ENCODE measurements at regions of chr9 and their contacts with region 1.

Region 1: DNA sequence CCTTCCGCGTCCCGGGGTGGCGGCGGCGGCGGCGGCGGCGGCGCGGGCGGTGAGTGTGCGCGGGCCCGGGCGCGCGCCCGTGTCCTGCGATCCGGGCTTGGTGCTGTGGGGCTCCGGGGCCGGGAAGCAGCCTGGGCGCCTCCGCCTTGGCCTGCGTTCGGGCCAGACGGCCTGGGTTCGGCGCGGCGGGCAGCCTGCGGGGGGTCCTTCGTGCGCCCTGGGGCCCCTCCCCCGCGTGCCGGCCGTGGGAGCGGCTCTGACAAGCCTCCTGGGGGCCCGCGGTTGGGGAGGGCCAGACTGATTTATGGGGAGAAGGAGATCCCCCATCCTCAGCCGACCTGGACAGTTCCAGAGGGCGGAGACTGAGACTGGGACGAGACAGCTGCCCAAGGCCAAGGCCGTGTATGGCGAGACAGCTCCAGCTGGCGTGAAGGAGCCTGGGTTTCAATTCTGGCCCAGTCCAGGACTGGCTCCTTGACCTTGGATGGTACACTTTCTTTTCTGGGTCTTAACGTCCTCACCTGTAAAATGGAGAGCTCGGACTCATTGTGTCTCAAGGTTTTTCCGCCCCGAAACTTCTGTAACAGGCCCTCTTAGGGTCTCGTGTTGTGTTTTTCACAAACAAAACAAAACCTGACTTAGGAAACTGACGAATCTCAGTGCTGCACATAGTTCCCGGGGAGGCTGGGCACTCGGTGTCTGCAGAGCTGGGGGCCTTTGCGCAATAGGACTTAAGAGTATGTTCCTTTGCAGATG is 603 bp downstream of the TMEM268 start:
- DNase-seq: peak; percentile 58
- ATAC-seq: peak; percentile 84
- H3K4me3 ChIP-seq: peak overlapping the region; percentile 56
- H3K27ac ChIP-seq: peak overlapping the region; percentile 76
- H3K4me1 ChIP-seq: peaks cover 19% of the 10 kb centered on the region
- H3K27me3 ChIP-seq: no peaks in the 10 kb centered on the region
- CTCF ChIP-seq: no peak
- POLR2A ChIP-seq: peak; percentile 20; the same call in 1 of the 2 replicates
- RAD21 ChIP-seq: no peak

Region 2: GRCh38 chr9:114487607-114488300 is 123.9 kb before region 1 on chr9:
- CTCF ChIA-PET with region 1: no interaction called
- POLR2A ChIA-PET with region 1: no interaction called
- dilution Hi-C with region 1: no loop called
- in situ Hi-C with region 1: no loop called
- intact Hi-C with region 1: loop called (anchors 5 kb)
- DNase-seq: peak; percentile 69
- ATAC-seq: peak; percentile 98
- H3K4me3 ChIP-seq: no peak overlapping the region
- H3K27ac ChIP-seq: no peak overlapping the region
- H3K4me1 ChIP-seq: peaks cover 4% of the 10 kb centered on the region
- H3K27me3 ChIP-seq: peaks cover 1% of the 10 kb centered on the region; the same call in 1 of the 2 replicates
- CTCF ChIP-seq: peak; percentile 86
- POLR2A ChIP-seq: 0 out of 2 replicates have a peak, but pooled peaks have one; percentile 35
- RAD21 ChIP-seq: peak; percentile 87

Region 3: DNA sequence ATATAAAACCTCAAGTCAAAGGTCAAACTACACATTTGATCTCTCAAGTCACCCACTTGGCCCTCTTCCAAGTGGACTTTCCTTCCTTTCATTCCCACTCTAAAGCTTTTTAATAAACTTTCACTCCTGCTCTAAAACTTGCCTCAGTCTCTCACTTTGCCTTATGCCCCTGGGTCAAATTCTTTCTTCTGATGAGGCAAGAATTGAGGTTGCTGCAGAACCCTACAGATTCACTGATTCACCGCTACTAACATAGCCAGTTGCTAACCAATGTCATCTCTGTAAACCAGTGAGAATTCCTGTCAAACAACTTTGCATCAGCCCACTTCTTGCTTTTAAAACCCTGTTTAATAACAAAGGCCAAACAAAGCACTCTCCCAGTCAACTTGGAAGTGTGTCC is 31.0 kb before region 1 on chr9:
- CTCF ChIA-PET with region 1: no interaction called
- POLR2A ChIA-PET with region 1: no interaction called
- dilution Hi-C with region 1: no loop called
- in situ Hi-C with region 1: no loop called
- intact Hi-C with region 1: no loop called
- DNase-seq: no peak
- ATAC-seq: no peak
- H3K4me3 ChIP-seq: no peak overlapping the region
- H3K27ac ChIP-seq: no peak overlapping the region
- H3K4me1 ChIP-seq: no peaks in the 10 kb centered on the region
- H3K27me3 ChIP-seq: peaks cover 2% of the 10 kb centered on the region; the same call in 1 of the 2 replicates
- CTCF ChIP-seq: no peak
- POLR2A ChIP-seq: no peak
- RAD21 ChIP-seq: no peak

Region 4: GRCh38 chr9:114718801-114719221 is 107.1 kb after region 1 on chr9:
- CTCF ChIA-PET with region 1: no interaction called
- POLR2A ChIA-PET with region 1: no interaction called
- dilution Hi-C with region 1: no loop called
- in situ Hi-C with region 1: no loop called
- intact Hi-C with region 1: no loop called
- DNase-seq: no peak
- ATAC-seq: no peak
- H3K4me3 ChIP-seq: no peak overlapping the region
- H3K27ac ChIP-seq: no peak overlapping the region
- H3K4me1 ChIP-seq: peaks cover 19% of the 10 kb centered on the region
- H3K27me3 ChIP-seq: peaks cover 54% of the 10 kb centered on the region
- CTCF ChIP-seq: no peak
- POLR2A ChIP-seq: no peak
- RAD21 ChIP-seq: no peak